Astrocyte of the cerebellum (primary cell): ENCODE measurements at regions of chr10 and their contacts with region 1.

Region 1: GRCh38 chr10:3785257-3785850 is 345 bp upstream of the KLF6 start:
- DNase-seq: peak; percentile 95
- H3K4me3 ChIP-seq: peak overlapping the region; percentile 80
- CTCF ChIP-seq: no peak

Region 2: DNA sequence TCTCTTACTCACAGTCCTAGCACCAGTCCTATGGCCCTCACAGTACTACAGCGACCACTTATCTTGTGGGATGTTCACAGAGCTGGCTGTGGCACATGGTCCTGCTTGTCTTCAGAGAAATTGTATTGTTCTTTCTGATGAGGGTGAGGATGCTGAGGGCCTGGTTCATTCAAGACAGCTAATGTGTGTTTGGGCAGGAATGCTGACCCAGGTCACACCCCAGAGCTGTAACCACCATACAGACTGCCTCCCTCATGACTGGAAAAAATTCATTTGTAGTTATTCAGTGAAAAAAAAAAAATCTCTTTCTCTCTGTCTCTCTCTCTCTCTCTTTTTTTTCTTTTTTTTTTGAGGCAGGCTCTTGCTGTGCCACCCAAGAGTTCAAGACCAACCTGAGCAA is 83.9 kb before region 1 on chr10:
- in situ Hi-C with region 1: no loop called
- DNase-seq: no peak
- H3K4me3 ChIP-seq: no peak overlapping the region
- CTCF ChIP-seq: no peak

Region 3: GRCh38 chr10:4767033-4767814 is 981.9 kb after region 1 on chr10:
- in situ Hi-C with region 1: loop called (anchors 25 kb)
- DNase-seq: peak; percentile 54
- H3K4me3 ChIP-seq: no peak overlapping the region
- CTCF ChIP-seq: peak; percentile 70